GM10248 (cell line): ENCODE measurements at regions of chr22 and their contacts with region 1.

Region 1: DNA sequence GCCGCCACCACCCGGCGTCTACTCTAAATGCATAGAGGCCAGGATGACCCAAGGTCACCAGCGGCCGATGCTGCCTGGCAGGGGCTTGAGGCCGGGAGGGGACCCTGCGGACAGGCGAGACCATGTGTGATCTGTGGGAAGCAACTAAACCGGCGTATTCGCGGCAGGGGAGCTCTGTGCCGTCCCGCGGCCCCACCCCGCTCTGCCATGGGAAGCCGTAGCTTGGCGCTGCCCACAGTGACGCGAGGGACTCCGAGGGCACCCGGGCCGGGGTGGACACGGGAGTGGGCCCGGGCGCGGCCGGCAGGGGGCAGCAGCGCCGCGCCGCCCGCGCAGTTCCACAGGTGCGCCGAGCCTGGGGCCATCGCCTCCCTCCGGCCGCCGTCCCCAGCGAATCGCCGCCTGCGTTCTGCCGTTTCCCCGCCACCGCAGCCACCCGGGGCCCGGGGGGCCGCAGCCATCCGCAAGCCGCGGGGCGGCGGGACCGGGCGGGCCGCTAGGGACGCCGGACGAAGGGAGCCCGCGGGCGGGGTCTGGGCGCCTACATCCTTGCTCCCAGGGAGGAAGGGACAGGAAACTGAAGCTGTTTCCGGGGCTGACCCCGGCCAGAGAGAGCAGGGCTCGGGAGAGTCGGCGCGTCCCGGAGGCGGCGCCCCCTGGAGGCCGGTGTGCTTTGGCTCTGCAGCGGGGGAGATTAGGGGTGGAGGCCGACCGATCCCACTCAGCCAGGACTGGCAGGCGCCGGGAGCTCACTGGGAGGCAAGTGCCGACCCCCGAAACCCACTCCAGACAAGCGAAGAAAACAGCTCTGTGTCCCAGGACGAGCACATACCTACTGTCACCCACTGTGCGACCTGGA is 12.5 kb upstream of the HDHD5 start:
- DNase-seq: peak; percentile 94
- CTCF ChIP-seq: peak; percentile 91

Region 2: DNA sequence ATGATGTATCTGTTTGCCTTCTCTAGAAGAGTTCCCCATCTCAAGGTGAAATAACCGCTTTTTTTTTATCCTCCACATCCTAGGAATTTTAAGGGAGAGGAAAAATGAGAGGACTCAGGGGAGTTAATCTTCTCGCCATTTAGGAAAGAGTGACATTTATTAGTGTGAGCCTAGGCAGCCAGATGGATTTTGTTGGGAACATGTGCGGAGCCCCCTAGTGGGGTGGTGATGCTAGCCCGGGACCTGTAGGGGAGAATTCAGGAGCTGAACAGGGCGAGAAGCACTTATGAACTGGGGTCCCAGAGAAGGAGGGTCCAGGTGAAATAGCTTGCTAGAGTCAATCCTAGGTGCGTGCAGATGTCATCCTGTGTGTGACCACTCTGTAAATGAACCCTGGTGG is 76.0 kb before region 1 on chr22:
- CTCF ChIA-PET with region 1: interaction called, 10 read pairs
- POLR2A ChIA-PET with region 1: no interaction called
- DNase-seq: no peak
- CTCF ChIP-seq: no peak

Region 3: GRCh38 chr22:17158568-17159503 is 12.7 kb before region 1 on chr22 and contains the start of gene HDHD5:
- CTCF ChIA-PET with region 1: interaction called, 137 read pairs
- POLR2A ChIA-PET with region 1: no interaction called
- DNase-seq: peak; percentile 94
- CTCF ChIP-seq: no peak

Region 4: GRCh38 chr22:17237038-17237668 is 65.6 kb after region 1 on chr22:
- CTCF ChIA-PET with region 1: interaction called, 27 read pairs
- POLR2A ChIA-PET with region 1: no interaction called
- DNase-seq: peak; percentile 84
- CTCF ChIP-seq: no peak

Region 5: DNA sequence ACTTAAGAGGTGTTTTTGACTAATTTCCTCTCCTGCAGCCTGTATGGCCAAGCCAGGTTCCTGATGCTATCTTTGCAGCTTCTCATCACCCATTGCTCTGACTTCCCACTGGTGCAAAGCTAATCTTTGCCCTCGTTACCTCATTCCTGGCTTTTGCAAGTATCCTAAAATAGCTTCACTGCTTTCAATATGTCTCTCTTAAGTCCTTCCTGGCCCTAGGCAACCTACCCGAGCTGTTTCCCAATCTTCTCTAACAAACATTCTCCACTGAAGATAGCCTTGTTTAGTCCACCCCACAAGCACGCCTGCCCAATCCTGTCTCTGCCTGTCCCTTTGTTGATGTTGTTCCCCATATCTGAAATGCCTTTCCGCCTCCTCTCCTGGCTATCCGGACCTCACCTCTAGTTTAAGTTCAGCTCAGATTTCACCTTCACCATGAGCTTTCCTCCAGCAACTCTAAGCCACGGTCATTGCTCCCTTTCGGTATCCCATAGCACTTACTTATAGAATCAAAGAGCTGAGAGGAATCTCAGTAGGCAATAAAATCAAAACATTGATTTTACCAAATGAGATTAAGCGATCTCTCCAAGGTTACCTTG is 167.7 kb after region 1 on chr22:
- CTCF ChIA-PET with region 1: interaction called, 21 read pairs
- POLR2A ChIA-PET with region 1: no interaction called
- DNase-seq: no peak
- CTCF ChIP-seq: no peak

Region 6: DNA sequence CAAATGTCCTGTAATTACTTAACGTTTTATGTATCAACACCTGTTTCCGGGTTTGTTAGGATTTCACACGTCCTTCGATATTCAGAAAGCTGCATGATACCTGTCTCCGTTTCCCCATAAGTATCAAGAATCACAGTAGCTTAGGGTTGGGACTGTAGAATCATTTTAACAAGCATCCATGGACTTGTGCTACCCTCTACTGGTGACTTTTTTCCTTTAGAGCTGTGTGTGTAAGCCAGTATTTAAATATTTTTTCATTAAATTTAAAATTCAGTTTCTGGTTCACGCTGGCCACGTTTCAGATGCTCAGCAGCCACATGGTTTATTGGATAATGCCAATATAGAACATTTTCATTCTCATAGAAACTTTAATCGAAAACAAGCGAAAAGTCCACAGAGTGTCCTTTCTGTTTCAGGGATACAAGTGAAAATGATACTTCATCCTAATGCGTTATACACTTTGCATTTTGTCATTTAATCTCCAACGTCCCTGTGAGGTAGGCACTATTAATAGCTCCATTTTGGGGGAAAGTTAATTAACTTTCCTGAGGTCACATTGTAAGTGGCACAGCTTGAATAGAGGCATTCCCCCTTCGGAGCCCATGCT is 330.2 kb after region 1 on chr22:
- CTCF ChIA-PET with region 1: interaction called, 186 read pairs
- POLR2A ChIA-PET with region 1: no interaction called
- DNase-seq: peak; percentile 68
- CTCF ChIP-seq: peak; percentile 63